SK-N-SH (cell line): ENCODE measurements at regions of chr2 and their contacts with region 1.

Region 1: GRCh38 chr2:72862239-72862988 is 24.8 kb upstream of the SPR start:
- DNase-seq: peak; percentile 91
- H3K4me3 ChIP-seq: peak overlapping the region; percentile 31 to 37
- H3K27ac ChIP-seq: no peak overlapping the region
- H3K4me1 ChIP-seq: peaks cover 0 to 9% of the 10 kb centered on the region in 2 experiments; a peak in 1 of 4 replicates
- H3K27me3 ChIP-seq: peaks cover 5% of the 10 kb centered on the region; the same call in 1 of the 2 replicates
- CTCF ChIP-seq: peak; percentile 95
- EP300 ChIP-seq: no peak
- RAD21 ChIP-seq: peak; percentile 75

Region 2: DNA sequence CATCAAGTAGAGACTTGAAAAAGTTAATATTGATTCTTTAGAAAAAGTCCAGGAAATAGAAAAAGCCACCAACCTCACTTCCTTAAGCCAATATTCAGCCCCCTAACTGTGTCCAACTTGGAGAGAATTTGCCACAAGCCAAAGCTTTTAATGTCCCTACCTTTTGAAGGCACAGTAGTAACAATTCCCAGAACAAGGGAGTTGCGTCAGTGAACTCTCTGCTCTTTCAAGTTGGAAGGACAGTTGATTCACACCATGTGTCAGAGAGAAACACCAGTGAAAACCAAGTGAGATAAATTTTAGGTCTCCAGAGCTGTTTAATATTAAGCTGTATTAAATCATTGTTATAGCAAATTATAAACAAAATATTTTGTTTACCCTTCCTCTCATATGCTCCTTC is 102.7 kb before region 1 on chr2:
- CTCF ChIA-PET with region 1: interaction called, 17 read pairs
- POLR2A ChIA-PET with region 1: no interaction called
- DNase-seq: no peak
- H3K4me3 ChIP-seq: no peak overlapping the region
- H3K27ac ChIP-seq: no peak overlapping the region
- H3K4me1 ChIP-seq: no peaks in the 10 kb centered on the region; a peak in 2 of 4 replicates
- H3K27me3 ChIP-seq: no peaks in the 10 kb centered on the region
- CTCF ChIP-seq: no peak
- EP300 ChIP-seq: no peak
- RAD21 ChIP-seq: no peak

Region 3: DNA sequence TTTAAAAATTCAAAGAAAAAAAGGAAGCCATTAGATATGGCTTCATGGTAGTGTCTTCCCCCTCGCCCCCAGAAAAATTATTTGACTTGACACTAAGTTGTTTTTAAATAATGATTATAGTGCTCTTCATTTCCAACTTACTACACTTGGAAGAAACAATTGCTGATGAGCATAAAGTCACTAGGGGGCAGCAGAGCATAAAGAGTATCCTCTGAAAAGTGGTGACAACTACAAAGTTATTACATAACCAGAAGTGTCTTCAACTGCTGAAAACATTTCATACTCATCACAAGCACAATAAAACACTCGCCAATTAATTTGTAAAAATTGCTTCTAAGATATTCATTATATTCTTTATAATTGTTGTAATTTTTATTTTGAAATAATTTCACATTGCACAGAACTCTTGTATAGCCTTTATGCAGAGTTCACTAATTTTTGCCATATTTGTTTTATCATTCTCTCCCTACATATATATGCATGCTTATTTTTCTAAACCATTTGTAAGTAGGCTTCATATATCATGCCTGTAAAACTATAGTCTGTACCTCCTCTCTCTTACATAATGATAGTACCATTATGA is 91.4 kb before region 1 on chr2:
- CTCF ChIA-PET with region 1: interaction called, 116 read pairs
- POLR2A ChIA-PET with region 1: no interaction called
- DNase-seq: peak; percentile 56
- H3K4me3 ChIP-seq: no peak overlapping the region
- H3K27ac ChIP-seq: no peak overlapping the region
- H3K4me1 ChIP-seq: no peaks in the 10 kb centered on the region
- H3K27me3 ChIP-seq: no peaks in the 10 kb centered on the region
- CTCF ChIP-seq: peak; percentile 92
- EP300 ChIP-seq: no peak
- RAD21 ChIP-seq: peak; percentile 95

Region 4: GRCh38 chr2:72780477-72780876 is 81.9 kb before region 1 on chr2:
- CTCF ChIA-PET with region 1: interaction called, 20 read pairs
- POLR2A ChIA-PET with region 1: no interaction called
- DNase-seq: no peak
- H3K4me3 ChIP-seq: no peak overlapping the region
- H3K27ac ChIP-seq: no peak overlapping the region
- H3K4me1 ChIP-seq: peaks cover 0 to 10% of the 10 kb centered on the region in 2 experiments; a peak in 2 of 4 replicates
- H3K27me3 ChIP-seq: no peaks in the 10 kb centered on the region
- CTCF ChIP-seq: no peak
- EP300 ChIP-seq: no peak
- RAD21 ChIP-seq: no peak

Region 5: GRCh38 chr2:72797740-72798139 is 64.7 kb before region 1 on chr2:
- CTCF ChIA-PET with region 1: interaction called, 16 read pairs
- POLR2A ChIA-PET with region 1: no interaction called
- DNase-seq: no peak
- H3K4me3 ChIP-seq: no peak overlapping the region
- H3K27ac ChIP-seq: no peak overlapping the region
- H3K4me1 ChIP-seq: peaks cover 0 to 11% of the 10 kb centered on the region in 2 experiments; a peak in 3 of 4 replicates
- H3K27me3 ChIP-seq: no peaks in the 10 kb centered on the region
- CTCF ChIP-seq: no peak
- EP300 ChIP-seq: no peak
- RAD21 ChIP-seq: no peak

Region 6: DNA sequence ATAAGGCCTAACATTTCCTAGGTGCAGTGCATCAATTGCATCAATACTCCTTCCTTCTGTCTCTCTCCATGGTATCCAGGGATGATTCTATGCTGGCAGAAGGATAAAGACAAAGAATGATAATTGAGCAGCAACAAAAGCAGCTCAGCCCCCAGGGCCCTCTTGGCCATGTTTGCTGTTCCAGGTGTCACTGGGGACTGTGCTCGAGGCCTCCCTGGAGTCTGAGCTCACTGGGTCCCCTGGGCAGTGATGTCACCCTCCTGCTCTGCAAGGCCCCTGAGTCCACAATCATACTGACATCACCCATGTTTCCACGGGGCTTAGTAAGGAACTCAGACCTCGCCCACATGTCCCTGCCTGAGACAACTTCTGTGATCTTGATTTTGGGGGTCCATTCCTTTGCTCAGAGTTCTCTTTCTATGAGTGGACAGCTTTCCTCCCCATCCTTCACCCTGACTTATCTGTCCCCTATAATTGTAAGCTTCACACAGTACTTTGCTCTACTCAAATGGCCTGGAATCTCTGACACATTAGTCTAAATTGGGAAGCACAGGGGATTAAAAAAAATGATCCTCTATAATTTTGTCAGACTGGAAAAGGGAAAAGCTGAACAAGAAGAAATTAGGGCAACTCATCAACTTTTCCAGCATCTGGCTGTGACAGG is 20.8 kb before region 1 on chr2:
- CTCF ChIA-PET with region 1: interaction called, 16 read pairs
- POLR2A ChIA-PET with region 1: no interaction called
- DNase-seq: no peak
- H3K4me3 ChIP-seq: no peak overlapping the region
- H3K27ac ChIP-seq: no peak overlapping the region
- H3K4me1 ChIP-seq: no peaks in the 10 kb centered on the region
- H3K27me3 ChIP-seq: no peaks in the 10 kb centered on the region; the same call in 1 of the 2 replicates
- CTCF ChIP-seq: no peak
- EP300 ChIP-seq: no peak
- RAD21 ChIP-seq: no peak

Region 7: DNA sequence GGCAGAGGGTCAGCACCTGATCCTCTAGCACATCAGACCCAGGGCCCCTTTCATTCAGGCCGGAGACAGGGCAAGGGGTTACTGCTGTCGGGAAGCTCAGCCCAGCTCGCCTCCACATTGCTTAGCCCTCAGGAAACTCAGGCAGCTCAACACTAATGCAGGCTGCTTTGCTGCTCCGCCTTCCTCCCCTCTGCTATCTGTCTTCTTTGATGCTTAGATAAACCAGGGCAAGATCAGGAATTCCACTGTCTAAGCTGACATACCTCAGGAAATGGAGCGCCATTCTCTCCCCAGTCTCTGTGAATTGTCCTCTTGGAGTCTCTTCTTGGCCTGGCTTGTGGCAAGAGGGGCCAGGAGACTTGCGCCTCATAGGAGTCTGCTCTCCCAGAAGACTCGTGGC is 11.1 kb before region 1 on chr2:
- CTCF ChIA-PET with region 1: interaction called, 33 read pairs
- POLR2A ChIA-PET with region 1: no interaction called
- DNase-seq: no peak
- H3K4me3 ChIP-seq: no peak overlapping the region
- H3K27ac ChIP-seq: no peak overlapping the region
- H3K4me1 ChIP-seq: no peaks in the 10 kb centered on the region
- H3K27me3 ChIP-seq: peaks cover 15% of the 10 kb centered on the region; the same call in 1 of the 2 replicates
- CTCF ChIP-seq: no peak
- EP300 ChIP-seq: no peak
- RAD21 ChIP-seq: no peak

Region 8: DNA sequence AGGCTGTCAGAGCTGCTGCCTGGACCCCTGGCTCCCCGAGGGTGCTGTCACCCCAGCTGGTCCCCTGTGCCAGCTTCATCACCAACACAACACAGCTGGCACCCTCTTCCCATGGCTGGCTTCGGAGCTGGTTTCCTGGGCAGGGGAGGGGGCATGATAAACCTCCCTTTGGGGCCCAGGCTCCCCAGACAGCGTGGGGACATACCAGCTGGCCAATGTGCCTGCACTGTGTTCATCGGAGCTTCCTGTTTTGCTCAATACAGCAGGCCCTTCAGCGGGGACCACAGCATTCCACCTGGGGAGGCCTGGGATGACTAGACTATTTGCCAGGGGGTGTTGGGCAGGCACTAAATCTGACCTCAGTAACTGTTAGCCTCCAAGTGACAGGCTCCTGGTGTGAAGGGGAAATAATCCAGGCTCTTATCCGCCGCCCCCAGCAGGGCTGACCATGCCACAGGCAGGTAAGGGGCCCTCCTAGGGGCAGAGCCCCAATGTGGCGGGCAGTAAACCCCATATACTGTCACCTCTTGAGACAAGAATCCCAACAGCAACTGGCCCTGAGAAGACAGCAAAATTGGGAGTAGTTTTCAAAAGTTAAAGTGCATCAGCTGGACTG is 99.5 kb after region 1 on chr2:
- CTCF ChIA-PET with region 1: no interaction called
- POLR2A ChIA-PET with region 1: no interaction called
- DNase-seq: no peak
- H3K4me3 ChIP-seq: no peak overlapping the region
- H3K27ac ChIP-seq: no peak overlapping the region
- H3K4me1 ChIP-seq: peaks cover 0 to 7% of the 10 kb centered on the region in 2 experiments; a peak in 1 of 4 replicates
- H3K27me3 ChIP-seq: no peaks in the 10 kb centered on the region
- CTCF ChIP-seq: no peak
- EP300 ChIP-seq: no peak
- RAD21 ChIP-seq: no peak